Left ventricle myocardium superior (tissue), 1 donor: ENCODE measurements at regions of chr14 and their contacts with region 1.

Region 1: GRCh38 chr14:21103710-21104447 is 3.0 kb downstream of the TMEM253 start:
- DNase-seq: peak; percentile 97
- ATAC-seq: peak; percentile 96

Region 2: GRCh38 chr14:21071225-21072030 is 32.5 kb before region 1 on chr14:
- intact Hi-C with region 1: loop called (anchors 5 kb)
- DNase-seq: peak; percentile 91
- ATAC-seq: peak; percentile 72

Region 3: DNA sequence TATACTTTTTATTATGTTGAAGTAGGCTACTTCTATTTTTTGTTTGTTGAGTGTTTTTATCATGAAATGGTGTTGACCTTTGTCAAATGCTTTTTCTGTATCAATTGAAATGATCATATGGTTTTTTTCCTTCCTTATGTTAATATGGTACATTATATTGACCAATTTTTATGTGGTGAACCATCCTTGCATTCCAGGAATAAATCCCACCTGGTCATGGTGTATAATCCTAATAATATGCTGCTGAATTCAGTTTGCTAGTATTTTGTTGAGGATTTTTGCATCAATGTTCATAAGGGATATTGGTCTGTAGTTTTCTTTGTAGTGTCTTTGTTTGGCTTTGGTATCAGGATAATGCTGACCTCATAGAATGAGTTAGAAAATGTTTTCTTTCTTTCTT is 41.6 kb after region 1 on chr14:
- intact Hi-C with region 1: no loop called
- DNase-seq: no peak
- ATAC-seq: no peak